Heart left ventricle (tissue), 16 donors: ENCODE measurements at regions of chr9 and their contacts with region 1.

Region 1: DNA sequence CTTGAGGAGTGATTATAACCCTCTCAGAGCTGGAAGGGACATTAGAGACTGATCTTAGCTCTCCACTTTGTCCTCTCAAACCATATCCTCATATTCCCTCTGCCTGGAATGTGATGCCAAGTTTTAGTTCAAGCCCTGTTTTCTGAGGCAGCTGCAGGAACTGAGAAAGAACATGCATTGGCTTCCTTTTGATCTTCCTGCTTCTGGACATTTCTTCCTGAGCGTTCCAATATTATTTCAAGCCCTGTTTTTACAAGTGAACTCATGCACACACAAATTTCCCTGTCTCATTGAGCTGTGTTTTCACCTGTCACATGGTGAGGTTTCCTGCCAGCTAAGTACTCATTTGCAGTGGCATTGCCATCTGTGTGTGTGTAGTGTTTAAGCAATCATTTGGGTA is 17.0 kb downstream of the FOCAD start:
- DNase-seq: no peak
- ATAC-seq: peak; percentile 29 to 73 (median 59)
- H3K4me3 ChIP-seq: no peak overlapping the region
- H3K27ac ChIP-seq: peak overlapping the region in 6 of 12 donors; percentile 9 to 54 (median 16)
- H3K4me1 ChIP-seq: peaks cover 0 to 23% (median 14%) of the 10 kb centered on the region in 12 donors
- H3K27me3 ChIP-seq: no peaks in the 10 kb centered on the region
- CTCF ChIP-seq: no peak
- POLR2A ChIP-seq: no peak

Region 2: GRCh38 chr9:20811872-20812271 is 110.8 kb after region 1 on chr9:
- intact Hi-C with region 1: loop called in 1 of 10 experiments (anchors 10 kb)
- DNase-seq: no peak
- ATAC-seq: no peak
- H3K4me3 ChIP-seq: no peak overlapping the region
- H3K27ac ChIP-seq: no peak overlapping the region
- H3K4me1 ChIP-seq: peaks cover 0 to 18% (median 10%) of the 10 kb centered on the region in 12 donors
- H3K27me3 ChIP-seq: no peaks in the 10 kb centered on the region
- CTCF ChIP-seq: no peak
- POLR2A ChIP-seq: no peak